ENCODE measurements at regions of chr9 and their contacts with region 1.

Region 1: GRCh38 chr9:94259077-94259892 is at the start of gene ZNF169:
- DNase-seq: peak; percentile 70 to 90 (median 85)
- ATAC-seq: peak; percentile 100
- H3K4me3 ChIP-seq: peak within 1 kb of the TSS; percentile 85 to 98
- H3K4me3 Mint-ChIP-seq: peak within 1 kb of the TSS; percentile 99
- H3K27ac ChIP-seq: peak within 1 kb of the TSS; percentile 54 to 75
- H3K27ac Mint-ChIP-seq: peak within 1 kb of the TSS; percentile 95
- H3K4me1 ChIP-seq: peaks cover 10% of the 10 kb centered on the region
- H3K4me1 Mint-ChIP-seq: peaks cover 38% of the 10 kb centered on the region
- H3K27me3 ChIP-seq: no peaks in the 10 kb centered on the region
- H3K27me3 Mint-ChIP-seq: peaks cover 5% of the 10 kb centered on the region
- CTCF ChIP-seq: no peak
- total RNA-seq, gene ZNF169: 3.3 to 6.4 TPM

Region 2: GRCh38 chr9:94030318-94031179 is 228.7 kb before region 1 on chr9:
- CTCF ChIA-PET with region 1: no interaction called
- POLR2A ChIA-PET with region 1: no interaction called
- intact Hi-C with region 1: loop called in 1 of 2 experiments (anchors 2 kb)
- DNase-seq: peak; percentile 52 to 89 (median 77)
- ATAC-seq: peak; percentile 98
- H3K4me3 ChIP-seq: peak overlapping the region; percentile 76 to 97
- H3K4me3 Mint-ChIP-seq: peak overlapping the region; percentile 100
- H3K27ac ChIP-seq: peak overlapping the region; percentile 63 to 81
- H3K27ac Mint-ChIP-seq: peak overlapping the region; percentile 98
- H3K4me1 ChIP-seq: peaks cover 7% of the 10 kb centered on the region
- H3K4me1 Mint-ChIP-seq: peaks cover 23% of the 10 kb centered on the region
- H3K27me3 ChIP-seq: no peaks in the 10 kb centered on the region
- H3K27me3 Mint-ChIP-seq: peaks cover 6% of the 10 kb centered on the region
- CTCF ChIP-seq: no peak

Region 3: GRCh38 chr9:94173632-94174031 is 85.7 kb before region 1 on chr9:
- CTCF ChIA-PET with region 1: no interaction called
- POLR2A ChIA-PET with region 1: interaction called, 3 read pairs
- intact Hi-C with region 1: loop called in 1 of 2 experiments (anchors 2 kb)
- DNase-seq: no peak
- ATAC-seq: peak; percentile 17
- H3K4me3 ChIP-seq: no peak overlapping the region
- H3K4me3 Mint-ChIP-seq: no peak overlapping the region
- H3K27ac ChIP-seq: peak overlapping the region in 1 of 2 experiments; percentile 12
- H3K27ac Mint-ChIP-seq: peak overlapping the region; percentile 81
- H3K4me1 ChIP-seq: peaks cover 53% of the 10 kb centered on the region
- H3K4me1 Mint-ChIP-seq: peaks cover 78% of the 10 kb centered on the region
- H3K27me3 ChIP-seq: no peaks in the 10 kb centered on the region
- H3K27me3 Mint-ChIP-seq: no peaks in the 10 kb centered on the region
- CTCF ChIP-seq: no peak

Region 4: GRCh38 chr9:94245651-94246050 is 13.6 kb before region 1 on chr9:
- CTCF ChIA-PET with region 1: no interaction called
- POLR2A ChIA-PET with region 1: no interaction called
- intact Hi-C with region 1: no loop called
- DNase-seq: no peak
- ATAC-seq: no peak
- H3K4me3 ChIP-seq: no peak overlapping the region
- H3K4me3 Mint-ChIP-seq: no peak overlapping the region
- H3K27ac ChIP-seq: no peak overlapping the region
- H3K27ac Mint-ChIP-seq: no peak overlapping the region
- H3K4me1 ChIP-seq: peaks cover 7% of the 10 kb centered on the region
- H3K4me1 Mint-ChIP-seq: peaks cover 10% of the 10 kb centered on the region
- H3K27me3 ChIP-seq: no peaks in the 10 kb centered on the region
- H3K27me3 Mint-ChIP-seq: peaks cover 18% of the 10 kb centered on the region
- CTCF ChIP-seq: no peak